MCF 10A (cell line): ENCODE measurements at regions of chr5 and their contacts with region 1.

Region 1: DNA sequence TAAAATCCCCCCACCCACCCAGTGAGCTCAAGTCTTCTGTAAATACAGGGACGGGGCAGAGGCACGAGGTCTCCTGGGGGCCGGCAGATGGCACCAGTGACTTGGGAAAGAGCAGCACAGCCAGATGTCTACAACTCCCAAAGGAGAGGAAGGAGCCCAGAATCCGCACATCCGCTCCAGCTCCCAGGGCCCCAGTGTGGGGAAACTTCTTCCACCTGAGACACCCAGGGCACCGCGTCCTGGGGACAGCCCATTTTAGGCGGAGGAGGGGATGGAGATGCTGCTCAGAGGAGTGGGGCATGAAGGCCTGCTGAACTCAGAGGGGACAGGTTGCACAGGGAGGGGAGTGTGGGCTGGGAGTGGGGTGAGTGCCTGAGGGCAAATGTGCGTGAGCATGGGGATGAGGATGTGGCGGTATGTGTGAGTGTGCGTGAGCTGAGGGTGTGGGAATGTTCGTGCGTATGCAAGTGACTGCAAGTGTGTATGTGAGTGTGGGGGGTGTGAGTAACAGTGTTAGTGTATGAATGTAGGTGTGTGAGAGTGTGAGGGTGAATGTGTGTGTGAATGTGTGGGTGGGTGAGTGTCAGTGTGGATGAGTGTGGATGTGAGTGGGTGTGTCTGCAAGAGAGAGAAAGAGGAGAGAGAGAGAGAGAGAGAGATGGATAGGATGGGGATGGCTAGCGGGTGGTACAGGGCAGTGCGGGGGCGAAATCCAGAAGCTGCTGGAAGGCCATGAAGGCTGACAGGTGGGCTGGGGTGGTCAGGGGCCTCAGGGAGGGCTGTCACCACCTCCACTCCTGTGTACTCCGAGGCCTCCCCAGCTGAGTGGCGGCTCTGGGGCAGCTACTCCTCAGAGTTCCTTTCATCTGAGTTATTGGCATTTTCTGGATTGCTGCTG is 63.5 kb downstream of the DUSP1 start:
- DNase-seq: peak; percentile 89
- H3K4me3 Mint-ChIP-seq: no peak overlapping the region
- H3K27ac Mint-ChIP-seq: no peak overlapping the region
- H3K4me1 Mint-ChIP-seq: peaks cover 7% of the 10 kb centered on the region
- H3K27me3 Mint-ChIP-seq: no peaks in the 10 kb centered on the region
- CTCF ChIP-seq: peak; percentile 88

Region 2: DNA sequence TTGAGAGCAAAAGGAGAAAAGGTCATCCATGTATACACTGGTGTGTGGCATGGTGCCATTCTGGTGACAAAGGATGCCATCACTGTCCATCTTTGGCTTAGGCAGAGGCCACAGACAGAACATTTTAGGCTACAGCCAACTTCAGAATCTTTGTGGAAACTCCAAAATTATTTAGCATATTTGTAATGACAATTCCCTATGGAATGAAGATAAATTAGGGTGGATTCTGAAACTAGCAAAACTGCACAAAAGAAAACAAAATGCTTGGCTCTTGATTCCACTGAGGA is 793.6 kb before region 1 on chr5:
- CTCF ChIA-PET with region 1: no interaction called
- POLR2A ChIA-PET with region 1: no interaction called
- intact Hi-C with region 1: no loop called
- DNase-seq: no peak
- H3K4me3 Mint-ChIP-seq: no peak overlapping the region
- H3K27ac Mint-ChIP-seq: no peak overlapping the region
- H3K4me1 Mint-ChIP-seq: peaks cover 27% of the 10 kb centered on the region
- H3K27me3 Mint-ChIP-seq: no peaks in the 10 kb centered on the region
- CTCF ChIP-seq: no peak

Region 3: GRCh38 chr5:172162323-172162986 is 545.1 kb before region 1 on chr5:
- CTCF ChIA-PET with region 1: no interaction called
- POLR2A ChIA-PET with region 1: no interaction called
- intact Hi-C with region 1: no loop called
- DNase-seq: no peak
- H3K4me3 Mint-ChIP-seq: no peak overlapping the region
- H3K27ac Mint-ChIP-seq: no peak overlapping the region
- H3K4me1 Mint-ChIP-seq: peaks cover 5% of the 10 kb centered on the region
- H3K27me3 Mint-ChIP-seq: no peaks in the 10 kb centered on the region
- CTCF ChIP-seq: no peak

Region 4: DNA sequence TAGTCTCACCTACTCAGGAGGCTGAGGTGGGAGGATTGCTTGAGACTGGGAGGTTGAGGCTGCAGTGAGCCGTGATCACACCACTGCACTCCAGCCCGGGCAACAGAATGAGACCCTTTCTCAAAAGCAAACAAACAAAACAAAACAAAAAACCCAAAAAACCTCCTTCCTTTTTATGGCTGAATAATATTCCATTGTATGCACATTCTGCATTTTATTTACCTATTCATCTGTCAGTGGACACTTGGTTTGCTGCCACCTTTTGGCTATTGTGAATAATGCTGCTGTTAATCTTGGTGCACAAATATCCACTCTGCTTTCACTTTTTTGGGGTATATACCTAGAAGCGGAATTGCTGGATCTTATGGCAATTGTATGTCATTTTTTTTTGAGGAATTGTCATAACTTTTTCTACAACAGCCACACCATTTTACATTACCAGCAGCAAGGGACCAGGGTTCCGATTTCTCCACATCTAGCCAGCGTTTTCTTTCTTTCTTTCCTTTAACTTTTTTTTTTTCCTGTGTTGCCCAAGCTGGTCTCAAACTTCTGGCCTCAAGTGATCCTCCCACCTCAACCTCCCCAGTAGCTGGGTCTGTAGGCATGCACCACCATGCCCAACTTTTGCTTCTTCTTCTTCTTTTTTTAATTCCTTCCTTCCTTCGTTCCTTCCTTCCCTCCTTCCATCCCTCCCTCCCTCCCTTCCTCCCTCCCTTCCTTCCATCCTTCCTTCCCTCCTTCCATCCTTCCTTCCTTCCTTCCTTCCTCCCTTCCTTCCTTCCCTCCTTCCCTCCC is 496.8 kb after region 1 on chr5:
- CTCF ChIA-PET with region 1: interaction called, 6 read pairs
- POLR2A ChIA-PET with region 1: no interaction called
- intact Hi-C with region 1: loop called (anchors 2 kb)
- DNase-seq: peak; percentile 67
- H3K4me3 Mint-ChIP-seq: no peak overlapping the region
- H3K27ac Mint-ChIP-seq: no peak overlapping the region
- H3K4me1 Mint-ChIP-seq: peaks cover 26% of the 10 kb centered on the region
- H3K27me3 Mint-ChIP-seq: peaks cover 33% of the 10 kb centered on the region
- CTCF ChIP-seq: peak; percentile 66

Region 5: DNA sequence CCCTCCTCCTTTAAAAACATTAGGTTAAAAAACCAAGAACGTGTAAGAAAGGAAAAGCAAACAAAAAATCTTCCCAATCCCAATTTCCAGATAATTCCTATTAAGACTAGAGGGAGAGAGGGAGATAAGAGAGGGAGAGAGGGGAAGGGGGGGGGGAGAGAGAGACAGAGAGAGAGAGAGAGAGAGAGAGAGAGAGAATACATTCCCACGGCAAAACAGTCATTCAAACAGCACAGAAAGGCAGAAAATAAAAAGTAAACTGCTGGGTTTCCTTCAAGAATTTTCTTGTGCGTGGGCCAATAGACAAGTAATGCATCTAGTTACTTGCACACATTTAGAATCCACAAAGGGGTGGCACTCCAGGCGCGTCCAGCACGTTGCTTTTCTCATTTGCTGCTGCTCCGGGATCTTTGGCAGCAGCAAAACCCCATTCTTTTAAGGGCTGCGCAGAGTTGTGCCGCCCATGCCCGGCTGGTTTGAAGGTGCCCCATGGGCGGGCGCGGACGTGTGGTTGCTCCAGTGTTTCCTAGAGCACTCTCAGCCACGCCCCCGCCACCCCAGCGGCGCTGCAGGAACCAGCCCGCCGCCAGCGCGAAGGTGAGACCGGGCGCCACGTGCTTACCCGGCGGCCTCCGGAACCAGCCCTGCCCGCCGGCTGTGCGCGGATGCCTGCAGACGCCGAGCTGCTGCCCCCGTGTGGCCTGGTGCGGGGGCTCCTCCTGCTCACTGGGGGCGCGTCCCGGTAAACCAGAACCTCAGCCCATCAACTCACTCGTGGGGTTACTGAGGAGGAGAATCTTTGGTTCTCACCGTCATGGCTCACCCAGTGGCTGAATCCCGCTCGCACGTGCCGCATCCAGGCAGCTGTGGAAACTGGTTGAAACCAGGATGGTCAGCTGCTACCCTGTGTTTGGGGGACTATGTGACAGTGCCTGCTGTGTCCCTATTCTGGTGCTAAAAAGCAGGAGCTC is 576.1 kb after region 1 on chr5:
- CTCF ChIA-PET with region 1: interaction called, 8 read pairs
- POLR2A ChIA-PET with region 1: no interaction called
- intact Hi-C with region 1: loop called (anchors 1 kb)
- DNase-seq: peak; percentile 79
- H3K4me3 Mint-ChIP-seq: peak overlapping the region; percentile 49
- H3K27ac Mint-ChIP-seq: no peak overlapping the region
- H3K4me1 Mint-ChIP-seq: peaks cover 6% of the 10 kb centered on the region
- H3K27me3 Mint-ChIP-seq: no peaks in the 10 kb centered on the region
- CTCF ChIP-seq: peak; percentile 96